Tibial artery (tissue), 4 donors: ENCODE measurements at regions of chr22 and their contacts with region 1.

Region 1: DNA sequence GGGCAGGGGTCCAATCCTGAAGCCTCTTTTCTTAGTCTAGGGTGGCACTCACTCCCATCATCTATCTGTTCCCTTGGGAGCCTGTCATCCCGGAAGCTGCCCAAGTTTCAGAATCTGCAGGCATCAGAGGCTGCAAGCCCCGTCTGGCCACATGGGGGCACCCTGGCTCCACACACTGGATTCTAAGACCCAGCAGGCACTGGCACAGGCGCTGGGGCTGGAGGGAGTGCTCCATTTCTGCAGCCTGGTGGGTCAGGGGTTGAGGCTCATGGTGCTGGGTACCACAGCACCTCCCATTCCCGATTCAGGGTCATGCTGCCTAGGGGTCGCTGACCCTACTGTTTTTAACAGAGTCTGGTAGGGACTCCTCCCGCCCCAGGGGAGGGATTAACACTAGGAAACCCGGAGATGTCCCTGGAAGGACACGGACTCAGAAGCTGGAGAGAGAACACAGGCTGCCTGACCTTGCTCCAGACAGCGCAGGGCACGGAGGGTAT is 243.9 kb upstream of the SYN3 start:
- DNase-seq: peak; percentile 69 to 81
- H3K4me3 ChIP-seq: no peak overlapping the region
- H3K27ac ChIP-seq: no peak overlapping the region
- H3K4me1 ChIP-seq: peaks cover 0 to 9% (median 3%) of the 10 kb centered on the region in 4 donors
- H3K27me3 ChIP-seq: no peaks in the 10 kb centered on the region
- CTCF ChIP-seq: peak; percentile 88 to 97

Region 2: GRCh38 chr22:32202539-32203180 is 1099.4 kb before region 1 on chr22:
- intact Hi-C with region 1: no loop called
- DNase-seq: no peak
- H3K4me3 ChIP-seq: no peak overlapping the region
- H3K27ac ChIP-seq: no peak overlapping the region
- H3K4me1 ChIP-seq: peaks cover 0 to 23% (median 2%) of the 10 kb centered on the region in 4 donors
- H3K27me3 ChIP-seq: peaks cover 0 to 63% of the 10 kb centered on the region in 2 donors
- CTCF ChIP-seq: peak in 1 of 2 experiments; percentile 21

Region 3: GRCh38 chr22:33579448-33580093 is 277.5 kb after region 1 on chr22:
- intact Hi-C with region 1: loop called (anchors 10 kb)
- DNase-seq: peak in 1 of 2 donors; percentile 38
- H3K4me3 ChIP-seq: no peak overlapping the region
- H3K27ac ChIP-seq: no peak overlapping the region
- H3K4me1 ChIP-seq: no peaks in the 10 kb centered on the region
- H3K27me3 ChIP-seq: no peaks in the 10 kb centered on the region
- CTCF ChIP-seq: peak; percentile 64 to 84

Region 4: GRCh38 chr22:34105461-34106062 is 803.5 kb after region 1 on chr22:
- intact Hi-C with region 1: loop called (anchors 10 kb)
- DNase-seq: peak; percentile 51 to 67
- H3K4me3 ChIP-seq: no peak overlapping the region
- H3K27ac ChIP-seq: no peak overlapping the region
- H3K4me1 ChIP-seq: no peaks in the 10 kb centered on the region
- H3K27me3 ChIP-seq: peaks cover 0 to 6% of the 10 kb centered on the region in 2 donors
- CTCF ChIP-seq: peak; percentile 46 to 55

Region 5: GRCh38 chr22:34354071-34354817 is 1052.1 kb after region 1 on chr22:
- intact Hi-C with region 1: no loop called
- DNase-seq: no peak
- H3K4me3 ChIP-seq: no peak overlapping the region
- H3K27ac ChIP-seq: no peak overlapping the region
- H3K4me1 ChIP-seq: no peaks in the 10 kb centered on the region
- H3K27me3 ChIP-seq: no peaks in the 10 kb centered on the region
- CTCF ChIP-seq: no peak